ENCODE measurements at regions of chr1 and their contacts with region 1.

Region 1: DNA sequence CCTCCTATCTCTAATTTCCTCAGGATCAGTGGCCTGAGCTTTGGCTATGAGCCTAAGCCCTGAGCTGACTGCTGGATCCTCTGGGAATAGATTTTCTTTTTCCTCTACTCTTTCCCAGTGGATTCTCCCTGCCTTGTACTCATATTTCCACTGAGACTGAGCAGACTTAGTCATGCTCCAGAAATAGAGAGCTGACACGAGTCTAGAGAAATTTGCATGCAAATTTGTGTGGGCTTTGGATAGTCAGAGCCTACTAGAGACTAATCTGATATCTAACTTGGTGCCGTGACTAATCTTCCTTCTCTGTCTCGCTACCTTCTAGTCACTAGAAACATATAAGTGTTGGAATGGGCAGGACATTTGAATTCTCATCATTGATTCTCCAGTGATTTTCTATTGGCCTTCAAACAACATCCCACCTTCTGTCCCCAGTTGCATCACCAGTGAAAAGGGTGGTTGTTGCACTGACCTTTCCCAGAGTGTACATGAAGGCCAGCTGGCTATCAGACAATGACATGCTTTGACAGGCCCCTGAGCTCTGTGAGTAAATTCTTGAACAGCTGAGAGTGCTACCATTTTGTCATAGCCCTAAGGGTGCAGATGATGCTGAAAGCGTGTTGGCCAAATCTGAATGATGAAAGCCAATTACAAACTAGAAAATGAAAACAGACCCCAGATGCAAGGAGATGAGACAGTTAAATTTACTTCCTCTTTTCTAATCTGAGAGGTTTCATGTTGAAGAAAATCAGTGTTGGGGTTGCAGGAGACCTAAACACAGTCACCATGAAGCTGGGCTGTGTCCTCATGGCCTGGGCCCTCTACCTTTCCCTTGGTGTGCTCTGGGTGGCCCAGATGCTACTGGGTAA is at the start of gene FCRLA:
- DNase-seq: peak; percentile 75
- ATAC-seq: peak; percentile 57
- H3K4me3 ChIP-seq: peak within 1 kb of the TSS; percentile 61 to 80 (median 69)
- H3K4me3 Mint-ChIP-seq: peak within 1 kb of the TSS; percentile 79
- H3K27ac ChIP-seq: peak within 1 kb of the TSS; percentile 80 to 81
- H3K27ac Mint-ChIP-seq: no peak within 1 kb of the TSS
- H3K4me1 ChIP-seq: peaks cover 61 to 67% of the 10 kb centered on the region in 2 donors
- H3K4me1 Mint-ChIP-seq: peaks cover 27% of the 10 kb centered on the region
- H3K27me3 ChIP-seq: no peaks in the 10 kb centered on the region
- H3K27me3 Mint-ChIP-seq: no peaks in the 10 kb centered on the region
- CTCF ChIP-seq: no peak
- total RNA-seq, gene FCRLA: 140 and 142 TPM in 2 replicates

Region 2: DNA sequence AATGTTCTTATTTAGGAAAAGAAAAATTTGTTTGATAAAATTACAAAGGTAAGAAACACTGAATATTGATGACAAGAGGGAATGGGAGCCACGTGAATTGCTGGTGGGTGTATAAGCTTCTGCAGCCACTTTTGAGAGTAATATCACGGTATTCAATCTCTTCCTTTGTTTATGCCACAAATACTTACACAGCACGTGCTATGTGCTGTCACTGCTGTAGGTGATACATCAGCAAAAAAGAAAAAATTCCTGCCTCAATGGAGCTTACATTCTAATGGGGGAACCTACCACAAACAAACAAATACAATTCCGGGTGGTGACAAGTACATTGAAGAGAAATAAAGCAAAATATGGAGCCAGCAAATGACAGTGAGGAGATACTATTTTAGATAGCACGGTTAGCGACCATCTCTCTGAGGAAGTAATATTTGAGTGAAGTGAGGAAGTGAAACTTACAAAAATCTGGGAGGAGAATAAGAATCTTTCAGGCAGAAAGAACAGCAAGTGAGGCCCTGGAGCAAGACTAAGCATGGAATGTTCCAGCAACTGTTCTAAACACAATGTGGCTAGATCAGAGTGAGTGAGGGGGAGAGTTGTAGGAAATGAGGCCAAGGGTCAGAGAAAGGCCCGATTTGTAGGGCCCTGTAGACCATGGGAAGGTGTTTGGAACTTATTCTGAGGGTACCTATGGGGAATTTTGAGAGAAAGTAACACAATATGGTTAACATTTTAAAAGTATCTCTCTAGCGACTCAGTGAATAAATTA is 12.0 kb after region 1 on chr1:
- CTCF ChIA-PET with region 1: interaction called, 9 read pairs
- POLR2A ChIA-PET with region 1: interaction called, 10 read pairs
- intact Hi-C with region 1: loop called (anchors 1 kb)
- DNase-seq: peak; percentile 81
- ATAC-seq: peak; percentile 88
- H3K4me3 ChIP-seq: peak overlapping the region in 4 of 5 experiments; percentile 18 to 63 (median 32)
- H3K4me3 Mint-ChIP-seq: peak overlapping the region; percentile 62
- H3K27ac ChIP-seq: peak overlapping the region; percentile 16 to 52
- H3K27ac Mint-ChIP-seq: peak overlapping the region; percentile 74
- H3K4me1 ChIP-seq: peaks cover 44 to 46% of the 10 kb centered on the region in 2 donors
- H3K4me1 Mint-ChIP-seq: peaks cover 53% of the 10 kb centered on the region
- H3K27me3 ChIP-seq: peaks cover 0 to 4% (median 0%) of the 10 kb centered on the region in 4 experiments
- H3K27me3 Mint-ChIP-seq: no peaks in the 10 kb centered on the region
- CTCF ChIP-seq: no peak

Region 3: GRCh38 chr1:161726596-161727457 is 20.1 kb after region 1 on chr1:
- CTCF ChIA-PET with region 1: interaction called, 45 read pairs
- POLR2A ChIA-PET with region 1: interaction called, 46 read pairs
- intact Hi-C with region 1: loop called (anchors 1 kb)
- DNase-seq: peak; percentile 81
- ATAC-seq: peak; percentile 72
- H3K4me3 ChIP-seq: peak overlapping the region; percentile 64 to 88 (median 85)
- H3K4me3 Mint-ChIP-seq: peak overlapping the region; percentile 100
- H3K27ac ChIP-seq: peak overlapping the region; percentile 62 to 73
- H3K27ac Mint-ChIP-seq: peak overlapping the region; percentile 97
- H3K4me1 ChIP-seq: peaks cover 21 to 34% of the 10 kb centered on the region in 2 donors
- H3K4me1 Mint-ChIP-seq: peaks cover 49% of the 10 kb centered on the region
- H3K27me3 ChIP-seq: peaks cover 0 to 7% (median 0%) of the 10 kb centered on the region in 4 experiments
- H3K27me3 Mint-ChIP-seq: no peaks in the 10 kb centered on the region
- CTCF ChIP-seq: no peak

Measured in B cell (primary cell).